Activated B cell treated with CpG ODN at 0.5 μM for 24 hours (primary cell): ENCODE measurements at regions of chr2 and their contacts with region 1.

Region 1: DNA sequence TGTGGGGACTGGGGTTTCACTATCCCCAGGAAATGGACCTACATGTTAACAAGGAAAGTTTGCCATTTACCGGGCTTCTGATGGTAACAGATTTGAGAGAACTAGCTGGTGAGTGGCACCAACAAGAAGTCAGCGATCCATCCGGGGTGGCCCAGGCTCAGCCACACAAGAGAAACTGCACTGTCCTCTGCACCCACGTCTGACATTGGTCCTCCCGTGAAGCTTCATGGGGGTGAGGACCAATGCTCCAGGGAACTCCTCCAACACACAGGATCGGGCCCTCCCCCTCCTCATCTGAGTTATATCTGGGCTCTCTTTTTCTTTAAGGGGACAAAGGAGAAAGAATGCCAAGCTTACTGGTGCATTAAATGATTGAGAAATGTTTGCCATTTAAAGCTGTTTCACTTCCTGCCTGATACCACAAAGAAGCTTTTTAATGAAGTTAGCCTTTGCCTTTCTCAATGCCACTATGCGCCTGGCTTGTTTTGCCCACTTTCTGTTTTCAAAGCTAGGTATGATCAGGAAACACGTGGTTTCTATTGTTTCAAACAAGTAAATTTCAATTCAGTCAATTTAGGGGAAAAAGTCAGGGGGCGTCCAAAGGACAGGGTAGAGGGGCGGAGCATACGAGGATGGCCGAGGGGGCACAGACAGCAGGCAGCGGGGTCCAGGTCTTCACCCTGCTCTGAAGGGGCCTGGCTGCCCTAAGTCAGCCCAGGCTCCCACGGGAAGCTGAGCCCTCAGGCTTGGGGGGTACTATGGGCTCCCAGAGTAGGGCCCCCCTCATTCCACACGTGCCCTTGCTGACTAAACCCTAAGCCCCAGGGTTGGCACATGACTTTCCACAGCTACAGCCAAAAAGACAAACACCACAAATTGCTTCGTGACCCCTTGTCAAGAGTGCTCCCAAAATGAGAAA is 204.0 kb upstream of the ID2 start:
- DNase-seq: peak; percentile 34
- ATAC-seq: peak; percentile 70
- H3K4me3 Mint-ChIP-seq: peak overlapping the region; percentile 71
- H3K27ac Mint-ChIP-seq: peak overlapping the region; percentile 89
- H3K4me1 Mint-ChIP-seq: peaks cover 59% of the 10 kb centered on the region
- H3K27me3 Mint-ChIP-seq: peaks cover 63% of the 10 kb centered on the region
- CTCF ChIP-seq: no peak

Region 2: GRCh38 chr2:7057865-7058400 is 1419.9 kb before region 1 on chr2:
- CTCF ChIA-PET with region 1: no interaction called
- POLR2A ChIA-PET with region 1: no interaction called
- intact Hi-C with region 1: loop called (anchors 5 kb)
- DNase-seq: no peak
- ATAC-seq: peak; percentile 83
- H3K4me3 Mint-ChIP-seq: peak overlapping the region; percentile 61
- H3K27ac Mint-ChIP-seq: peak overlapping the region; percentile 64
- H3K4me1 Mint-ChIP-seq: peaks cover 39% of the 10 kb centered on the region
- H3K27me3 Mint-ChIP-seq: peaks cover 2% of the 10 kb centered on the region
- CTCF ChIP-seq: no peak

Region 3: DNA sequence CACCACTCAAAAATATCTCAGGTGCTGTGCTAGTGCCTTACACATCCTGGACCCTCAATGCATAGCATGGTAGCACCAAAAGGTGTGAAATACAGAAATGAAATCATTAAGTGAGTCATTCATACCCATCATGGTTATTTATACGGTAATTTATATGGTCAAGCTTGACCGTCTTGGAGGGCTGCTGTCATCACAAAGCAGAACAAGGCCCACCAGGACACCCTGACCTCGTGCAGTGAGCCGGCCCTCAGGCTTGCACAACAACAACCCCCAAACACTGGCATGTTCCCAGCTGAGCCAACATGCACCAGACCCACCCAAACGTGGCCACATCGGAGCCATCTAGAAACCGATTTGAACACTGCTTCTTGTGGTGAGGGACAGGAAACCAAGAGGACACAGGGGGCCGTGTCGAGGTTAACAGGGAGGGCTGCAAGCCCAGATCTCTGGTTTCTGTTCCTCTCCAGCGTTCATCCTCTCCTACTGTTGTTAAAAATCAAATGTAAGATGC is 174.4 kb before region 1 on chr2:
- CTCF ChIA-PET with region 1: no interaction called
- POLR2A ChIA-PET with region 1: interaction called, 3 read pairs
- intact Hi-C with region 1: loop called (anchors 2 kb)
- DNase-seq: peak; percentile 39
- ATAC-seq: peak; percentile 83
- H3K4me3 Mint-ChIP-seq: peak overlapping the region; percentile 38
- H3K27ac Mint-ChIP-seq: peak overlapping the region; percentile 59
- H3K4me1 Mint-ChIP-seq: peaks cover 43% of the 10 kb centered on the region
- H3K27me3 Mint-ChIP-seq: peaks cover 63% of the 10 kb centered on the region
- CTCF ChIP-seq: no peak

Region 4: GRCh38 chr2:8441986-8442385 is 35.8 kb before region 1 on chr2:
- CTCF ChIA-PET with region 1: no interaction called
- POLR2A ChIA-PET with region 1: no interaction called
- intact Hi-C with region 1: loop called (anchors 5 kb)
- DNase-seq: no peak
- ATAC-seq: no peak
- H3K4me3 Mint-ChIP-seq: no peak overlapping the region
- H3K27ac Mint-ChIP-seq: no peak overlapping the region
- H3K4me1 Mint-ChIP-seq: peaks cover 25% of the 10 kb centered on the region
- H3K27me3 Mint-ChIP-seq: peaks cover 45% of the 10 kb centered on the region
- CTCF ChIP-seq: no peak

Region 5: GRCh38 chr2:8488001-8488738 is 10.4 kb after region 1 on chr2:
- CTCF ChIA-PET with region 1: no interaction called
- POLR2A ChIA-PET with region 1: interaction called, 15 read pairs
- intact Hi-C with region 1: loop called (anchors 1 kb)
- DNase-seq: peak; percentile 34
- ATAC-seq: peak; percentile 92
- H3K4me3 Mint-ChIP-seq: peak overlapping the region; percentile 73
- H3K27ac Mint-ChIP-seq: peak overlapping the region; percentile 57
- H3K4me1 Mint-ChIP-seq: peaks cover 29% of the 10 kb centered on the region
- H3K27me3 Mint-ChIP-seq: peaks cover 81% of the 10 kb centered on the region
- CTCF ChIP-seq: no peak

Region 6: DNA sequence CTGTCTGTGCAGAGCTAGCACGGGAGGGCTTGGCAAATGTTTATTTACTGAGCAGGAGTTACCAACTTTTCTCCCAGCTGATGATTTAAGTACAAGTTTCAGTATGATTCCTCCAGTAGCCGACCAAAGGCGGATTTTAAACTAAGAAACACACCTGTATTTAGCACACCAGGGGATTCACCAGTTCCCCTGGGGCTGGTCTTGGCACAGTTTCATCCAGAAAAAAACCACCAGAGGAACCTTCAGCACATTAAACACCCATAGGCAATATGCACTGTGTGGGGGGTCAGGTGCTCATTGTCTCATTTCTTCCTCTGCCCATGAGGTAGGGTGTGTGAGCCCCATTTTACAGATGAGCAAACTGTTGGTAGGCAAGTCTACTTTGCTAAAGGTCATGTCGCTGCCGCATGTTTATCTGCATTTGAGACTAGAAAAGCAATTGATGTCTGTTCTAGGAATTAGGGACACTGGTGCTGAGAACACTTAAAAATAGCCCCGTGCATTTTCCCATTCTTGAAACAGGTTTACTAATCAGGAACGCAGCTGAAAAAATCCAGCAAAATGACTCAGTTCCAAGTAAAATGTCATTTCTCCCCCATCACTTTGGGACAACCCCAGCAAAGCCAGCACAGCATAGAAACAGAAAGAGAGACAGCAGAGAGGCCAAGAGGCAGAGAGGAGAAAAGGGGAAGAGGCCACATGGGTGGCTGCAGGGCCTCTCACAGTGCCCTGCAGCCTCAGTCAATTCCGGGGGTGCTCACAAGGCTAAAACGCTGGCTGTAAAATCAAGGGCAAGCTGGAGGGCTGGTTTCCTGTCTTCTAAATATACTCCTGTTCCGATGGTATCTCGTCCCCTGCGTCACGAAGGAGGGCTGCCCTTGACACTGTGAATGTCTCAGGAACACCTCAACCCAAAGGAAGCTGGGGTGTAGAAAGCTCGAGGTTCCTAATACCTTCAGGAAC is 37.3 kb after region 1 on chr2:
- CTCF ChIA-PET with region 1: no interaction called
- POLR2A ChIA-PET with region 1: interaction called, 14 read pairs
- intact Hi-C with region 1: loop called (anchors 1 kb)
- DNase-seq: no peak
- ATAC-seq: peak; percentile 84
- H3K4me3 Mint-ChIP-seq: peak overlapping the region; percentile 36
- H3K27ac Mint-ChIP-seq: peak overlapping the region; percentile 27
- H3K4me1 Mint-ChIP-seq: peaks cover 27% of the 10 kb centered on the region
- H3K27me3 Mint-ChIP-seq: peaks cover 22% of the 10 kb centered on the region
- CTCF ChIP-seq: no peak

Region 7: GRCh38 chr2:8583400-8584173 is 105.8 kb after region 1 on chr2:
- CTCF ChIA-PET with region 1: no interaction called
- POLR2A ChIA-PET with region 1: no interaction called
- intact Hi-C with region 1: loop called (anchors 2 kb)
- DNase-seq: peak; percentile 80
- ATAC-seq: peak; percentile 94
- H3K4me3 Mint-ChIP-seq: peak overlapping the region; percentile 64
- H3K27ac Mint-ChIP-seq: peak overlapping the region; percentile 27
- H3K4me1 Mint-ChIP-seq: peaks cover 47% of the 10 kb centered on the region
- H3K27me3 Mint-ChIP-seq: peaks cover 18% of the 10 kb centered on the region
- CTCF ChIP-seq: no peak